ENCODE measurements at regions of chr11 and their contacts with region 1.

Region 1: DNA sequence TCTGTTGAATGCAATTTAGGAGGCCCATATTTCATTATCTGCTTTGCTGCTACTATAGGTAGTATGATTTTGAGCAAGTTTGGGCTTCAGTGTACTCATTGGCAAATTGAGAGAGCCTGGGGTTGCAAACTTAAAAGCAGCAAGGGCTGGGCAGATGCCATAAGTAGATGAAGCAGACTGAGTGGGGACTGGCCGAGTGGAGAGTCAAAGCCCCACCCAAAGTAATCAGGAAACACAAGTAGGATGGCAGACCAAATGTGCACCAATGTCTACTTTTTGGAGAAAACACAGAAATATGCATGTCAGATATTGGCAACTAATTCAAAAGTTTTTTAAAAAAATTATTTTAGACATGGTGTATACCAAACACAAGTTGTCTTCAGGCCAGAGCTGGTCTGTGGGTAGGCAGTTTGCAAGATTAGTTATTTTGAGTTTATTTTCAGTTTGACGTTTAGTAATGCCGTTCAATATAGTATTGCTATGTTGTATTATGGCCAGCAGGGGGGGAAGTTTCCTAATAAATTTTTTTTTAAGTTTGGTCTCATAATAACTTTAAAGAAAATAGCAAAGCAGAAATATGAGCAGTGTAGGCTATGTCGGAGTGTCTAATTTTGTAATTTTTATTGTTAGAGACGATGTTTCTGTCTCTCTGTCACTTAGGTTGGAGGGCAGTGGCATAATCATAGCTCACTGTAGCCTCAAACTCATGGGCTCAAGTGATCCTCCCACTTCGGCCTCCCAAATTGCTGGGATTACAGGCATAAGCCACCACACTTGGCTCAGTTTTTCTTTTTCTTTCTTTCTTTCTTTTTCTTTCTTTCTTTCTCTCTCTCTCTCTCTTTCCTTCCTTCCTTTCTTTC is 105.1 kb downstream of the HIPK3 start:
- H3K4me3 Mint-ChIP-seq: no peak overlapping the region
- H3K27ac Mint-ChIP-seq: no peak overlapping the region
- H3K4me1 Mint-ChIP-seq: peaks cover 9% of the 10 kb centered on the region
- H3K27me3 Mint-ChIP-seq: peaks cover 16% of the 10 kb centered on the region

Region 2: GRCh38 chr11:33542921-33543320 is 180.6 kb after region 1 on chr11:
- intact Hi-C with region 1: loop called (anchors 2 kb)
- H3K4me3 Mint-ChIP-seq: no peak overlapping the region
- H3K27ac Mint-ChIP-seq: no peak overlapping the region
- H3K4me1 Mint-ChIP-seq: no peaks in the 10 kb centered on the region
- H3K27me3 Mint-ChIP-seq: peaks cover 18% of the 10 kb centered on the region

Region 3: DNA sequence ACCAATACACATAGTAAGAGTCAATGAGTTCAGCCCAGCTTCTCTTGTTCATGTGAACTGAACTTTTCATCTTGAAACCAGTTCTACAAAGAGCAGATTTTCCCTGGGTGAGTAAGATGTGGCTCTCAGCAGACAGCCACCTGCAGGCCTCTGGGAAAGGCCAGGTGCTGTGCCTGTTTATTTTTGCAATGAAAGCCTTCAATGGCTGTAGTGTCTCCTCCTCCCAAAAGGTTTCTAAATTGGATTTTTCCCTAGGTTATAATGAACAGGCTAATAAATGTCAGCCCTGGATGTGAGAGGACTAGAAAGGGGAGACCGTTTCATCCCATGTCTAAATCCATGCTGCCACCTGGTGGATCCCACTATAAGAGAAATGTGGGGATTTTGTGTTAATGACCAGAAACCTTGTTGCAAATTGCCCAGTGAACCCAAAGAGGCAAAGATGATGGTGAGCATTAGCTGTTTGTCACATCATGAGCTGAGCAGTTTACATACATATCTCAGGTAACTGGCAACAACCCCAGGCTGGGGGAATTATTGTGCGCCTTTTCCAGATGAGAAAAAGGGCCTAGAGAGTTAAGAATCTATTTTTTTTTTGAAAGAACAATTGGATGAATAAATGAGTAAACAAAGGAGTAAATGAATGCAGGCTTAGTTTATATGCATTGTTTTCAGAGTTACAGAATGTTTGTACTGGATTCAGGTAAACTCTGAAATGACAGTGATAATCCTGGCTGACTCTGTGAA is 325.6 kb after region 1 on chr11:
- intact Hi-C with region 1: loop called (anchors 1 kb)
- H3K4me3 Mint-ChIP-seq: no peak overlapping the region
- H3K27ac Mint-ChIP-seq: no peak overlapping the region
- H3K4me1 Mint-ChIP-seq: peaks cover 21% of the 10 kb centered on the region
- H3K27me3 Mint-ChIP-seq: peaks cover 17% of the 10 kb centered on the region

Measured in dendritic cell treated with granulocyte-macrophage colony-stimulating factor and Interleukin-4, amounts not matched to agents 40 ng/mL and 50 ng/mL, for 4 days (primary cell).